AG04450 (cell line): ENCODE measurements at regions of chr2 and their contacts with region 1.

Region 1: DNA sequence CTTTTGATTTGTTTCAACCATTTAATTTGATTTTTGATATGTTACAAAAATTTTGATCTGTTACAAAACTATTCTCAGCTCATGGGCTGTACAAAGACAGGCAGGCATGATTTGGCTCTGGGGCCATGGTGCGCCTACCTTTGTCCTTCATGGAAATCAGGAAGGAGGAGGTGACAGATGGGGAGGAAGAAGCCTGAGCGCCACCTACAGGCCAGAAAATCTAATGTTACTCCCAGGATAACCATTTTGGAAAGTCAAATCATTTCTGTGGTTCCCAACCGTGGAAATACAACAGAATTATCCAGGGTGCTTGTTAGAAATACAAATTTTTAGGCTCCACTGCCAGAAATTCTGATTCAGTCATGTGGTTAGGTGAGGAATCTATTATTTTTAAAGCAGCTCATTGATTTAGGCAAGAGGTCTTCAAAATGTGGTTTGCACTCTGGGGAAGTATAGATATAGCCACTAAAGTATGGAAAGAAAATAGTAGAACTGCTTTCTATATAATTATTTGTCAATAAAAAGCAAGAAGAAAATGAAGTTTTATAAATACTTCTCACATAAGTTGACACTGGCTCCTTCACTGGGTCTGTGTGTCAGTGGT is 93.9 kb downstream of the EVA1A start:
- DNase-seq: no peak
- H3K4me3 ChIP-seq: no peak overlapping the region
- H3K27ac ChIP-seq: no peak overlapping the region
- H3K27me3 ChIP-seq: no peaks in the 10 kb centered on the region
- CTCF ChIP-seq: peak; percentile 59

Region 2: GRCh38 chr2:75560768-75561565 is 94.2 kb after region 1 on chr2 and contains the start of gene EVA1A:
- CTCF ChIA-PET with region 1: interaction called, 12 read pairs
- POLR2A ChIA-PET with region 1: no interaction called
- DNase-seq: peak; percentile 61
- H3K4me3 ChIP-seq: peak within 1 kb of the TSS; percentile 86
- H3K27ac ChIP-seq: peak within 1 kb of the TSS; percentile 97
- H3K27me3 ChIP-seq: no peaks in the 10 kb centered on the region
- CTCF ChIP-seq: no peak
- polyA plus RNA-seq, gene EVA1A: 22.8 and 32.5 TPM in 2 replicates

Region 3: DNA sequence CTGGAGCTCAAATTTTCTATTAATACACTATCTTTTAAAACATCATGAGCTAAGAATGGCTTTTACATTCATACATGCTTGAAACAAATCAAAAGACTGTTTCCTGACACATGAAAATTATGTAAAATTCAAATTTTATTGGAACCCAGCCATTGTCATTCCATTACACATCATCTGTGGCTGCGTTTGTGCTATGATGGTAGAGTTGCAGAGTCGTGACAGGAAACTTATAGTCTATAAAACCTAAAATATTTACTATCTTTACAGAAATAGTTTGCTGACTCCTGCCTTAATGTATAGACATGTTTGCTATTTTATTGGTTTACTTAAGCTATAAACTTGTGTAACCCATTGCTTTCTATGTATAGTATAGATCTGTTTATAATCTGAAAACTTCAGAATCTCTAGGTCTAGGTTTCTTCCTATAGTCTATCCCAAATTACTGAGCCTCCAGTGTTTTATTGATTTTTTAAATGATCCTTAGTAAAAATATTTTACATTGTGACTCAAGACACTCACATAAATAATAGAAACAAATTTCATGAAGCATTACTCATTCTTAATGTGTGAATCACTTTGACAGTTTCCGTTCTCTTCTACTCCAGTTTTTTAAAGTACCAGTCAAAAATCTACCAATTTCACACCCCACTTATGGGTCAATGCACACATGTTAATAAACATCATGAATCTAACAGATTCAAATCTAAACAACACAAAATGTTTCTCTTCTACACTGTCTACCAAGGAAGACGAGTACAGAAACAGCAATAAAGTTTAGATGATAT is 153.3 kb after region 1 on chr2:
- CTCF ChIA-PET with region 1: interaction called, 47 read pairs
- POLR2A ChIA-PET with region 1: no interaction called
- DNase-seq: no peak
- H3K4me3 ChIP-seq: no peak overlapping the region
- H3K27ac ChIP-seq: no peak overlapping the region
- H3K27me3 ChIP-seq: peaks cover 2% of the 10 kb centered on the region
- CTCF ChIP-seq: no peak

Region 4: GRCh38 chr2:75634945-75635344 is 168.1 kb after region 1 on chr2:
- CTCF ChIA-PET with region 1: interaction called, 106 read pairs
- POLR2A ChIA-PET with region 1: no interaction called
- DNase-seq: no peak
- H3K4me3 ChIP-seq: no peak overlapping the region
- H3K27ac ChIP-seq: no peak overlapping the region
- H3K27me3 ChIP-seq: peaks cover 14% of the 10 kb centered on the region
- CTCF ChIP-seq: no peak

Region 5: DNA sequence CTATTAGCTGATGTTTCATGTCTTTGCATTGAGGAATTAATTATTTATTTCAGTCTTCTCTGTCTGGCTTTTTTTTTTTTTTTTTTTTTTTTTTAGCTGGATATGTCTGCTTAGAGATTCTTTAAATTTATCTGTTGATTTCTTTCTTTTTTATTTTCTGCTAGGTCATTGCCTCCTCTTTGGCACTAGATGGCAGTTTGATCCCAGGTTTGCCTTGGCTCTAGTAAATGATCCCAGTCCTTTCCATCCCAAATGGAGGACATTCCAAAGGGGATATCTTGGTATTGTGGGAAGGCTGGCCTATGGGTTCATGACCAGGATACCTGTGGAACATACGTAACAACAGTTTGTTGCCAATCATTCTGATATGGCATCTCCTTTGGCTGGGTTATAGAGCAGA is 583.4 kb after region 1 on chr2:
- CTCF ChIA-PET with region 1: interaction called, 11 read pairs
- POLR2A ChIA-PET with region 1: no interaction called
- DNase-seq: no peak
- H3K4me3 ChIP-seq: no peak overlapping the region
- H3K27ac ChIP-seq: no peak overlapping the region
- H3K27me3 ChIP-seq: no peaks in the 10 kb centered on the region
- CTCF ChIP-seq: no peak